Activated CD8-positive, alpha-beta T cell treated with anti-CD3 and anti-CD28 coated beads, Interleukin-2, amount 10 ng/mL, durations not matched to agents 7 days and 5 days (primary cell): ENCODE measurements at regions of chr10 and their contacts with region 1.

Region 1: DNA sequence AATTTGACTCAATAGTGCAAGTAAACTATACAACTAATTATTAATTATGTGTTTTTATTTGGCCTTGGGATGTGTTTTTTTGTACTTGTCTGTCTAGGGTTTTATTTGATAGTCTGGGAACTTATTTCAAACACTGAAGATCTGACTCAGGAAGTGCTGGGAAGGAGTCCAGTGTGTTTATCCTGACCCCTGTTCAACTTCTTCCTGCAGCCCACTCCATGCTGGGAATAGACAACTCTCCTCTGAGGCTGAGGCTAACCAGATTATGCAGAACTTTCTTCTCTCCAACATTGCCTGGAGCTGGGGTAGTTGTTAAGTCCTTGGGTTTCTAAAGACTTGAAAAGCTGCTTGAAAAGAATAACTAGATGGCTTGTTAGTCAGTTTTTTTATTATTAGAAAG is 6.9 kb downstream of the CISD1 start:
- DNase-seq: no peak
- ATAC-seq: no peak
- H3K4me3 Mint-ChIP-seq: no peak overlapping the region
- H3K27ac Mint-ChIP-seq: no peak overlapping the region
- H3K4me1 Mint-ChIP-seq: peaks cover 9% of the 10 kb centered on the region
- H3K27me3 Mint-ChIP-seq: no peaks in the 10 kb centered on the region

Region 2: DNA sequence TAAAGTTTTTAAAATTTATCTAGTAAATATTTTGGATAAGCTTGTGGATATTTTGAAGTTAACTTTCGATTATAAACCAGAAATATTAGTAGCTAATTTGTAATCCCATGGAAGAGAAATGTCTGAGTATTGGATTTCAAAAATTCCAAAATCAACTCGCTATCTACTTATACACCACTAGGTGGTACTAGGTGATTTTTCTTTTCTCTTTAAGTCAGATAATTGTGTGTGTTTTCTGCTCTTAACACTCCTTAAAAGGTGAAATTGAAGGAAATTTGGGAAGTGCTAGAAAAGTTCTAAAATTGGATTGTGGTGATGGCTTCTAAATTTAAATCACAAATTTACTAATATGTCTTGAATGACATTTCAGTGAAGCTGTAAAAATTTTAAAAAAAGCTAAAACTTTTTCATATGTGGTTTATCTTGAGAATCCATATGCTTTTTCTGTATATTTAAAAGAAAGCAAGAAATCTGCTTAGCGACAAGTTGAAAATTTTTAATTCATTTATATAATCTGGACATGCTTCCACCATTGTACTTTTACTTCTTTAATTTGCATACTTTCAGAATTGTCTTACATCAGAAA is 98.5 kb before region 1 on chr10:
- CTCF ChIA-PET with region 1: interaction called, 11 read pairs
- POLR2A ChIA-PET with region 1: no interaction called
- DNase-seq: no peak
- ATAC-seq: no peak
- H3K4me3 Mint-ChIP-seq: no peak overlapping the region
- H3K27ac Mint-ChIP-seq: no peak overlapping the region
- H3K4me1 Mint-ChIP-seq: no peaks in the 10 kb centered on the region
- H3K27me3 Mint-ChIP-seq: peaks cover 5% of the 10 kb centered on the region

Region 3: DNA sequence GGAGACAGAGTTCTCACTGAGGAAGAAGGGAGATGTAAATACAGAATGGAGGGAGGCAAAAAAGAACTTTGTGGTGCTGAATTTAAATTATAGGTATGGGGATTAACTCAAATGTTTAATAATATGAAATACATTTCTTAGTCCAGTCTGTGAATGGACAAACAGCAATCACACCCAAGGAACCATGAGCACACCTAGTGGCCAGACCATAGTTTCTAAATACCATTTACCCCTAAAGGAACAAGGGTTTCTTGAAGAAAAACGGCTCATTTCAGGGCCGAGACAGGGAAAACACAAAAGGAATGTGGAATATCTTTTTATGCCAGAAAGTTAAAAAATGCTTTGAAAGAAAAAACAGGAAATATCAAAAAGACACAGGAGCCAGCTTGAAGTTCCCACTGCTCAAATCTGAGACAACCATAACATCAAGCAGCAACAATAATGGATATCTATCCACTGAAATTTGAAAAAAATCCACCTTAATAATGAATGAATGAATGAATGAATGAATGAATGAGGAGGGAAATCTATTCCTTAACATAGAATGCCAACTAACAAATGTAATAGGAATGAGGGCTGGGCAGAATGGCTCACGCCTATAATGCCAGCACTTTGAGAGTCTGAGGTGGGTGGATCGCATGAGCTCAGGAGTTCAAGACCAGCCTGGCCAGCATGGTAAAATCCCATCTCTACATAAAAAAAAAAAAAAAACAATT is 16.8 kb before region 1 on chr10:
- CTCF ChIA-PET with region 1: no interaction called
- POLR2A ChIA-PET with region 1: no interaction called
- DNase-seq: no peak
- ATAC-seq: no peak
- H3K4me3 Mint-ChIP-seq: no peak overlapping the region
- H3K27ac Mint-ChIP-seq: no peak overlapping the region
- H3K4me1 Mint-ChIP-seq: peaks cover 18% of the 10 kb centered on the region
- H3K27me3 Mint-ChIP-seq: no peaks in the 10 kb centered on the region